Panc1 (cell line): ENCODE measurements at regions of chr6 and their contacts with region 1.

Region 1: DNA sequence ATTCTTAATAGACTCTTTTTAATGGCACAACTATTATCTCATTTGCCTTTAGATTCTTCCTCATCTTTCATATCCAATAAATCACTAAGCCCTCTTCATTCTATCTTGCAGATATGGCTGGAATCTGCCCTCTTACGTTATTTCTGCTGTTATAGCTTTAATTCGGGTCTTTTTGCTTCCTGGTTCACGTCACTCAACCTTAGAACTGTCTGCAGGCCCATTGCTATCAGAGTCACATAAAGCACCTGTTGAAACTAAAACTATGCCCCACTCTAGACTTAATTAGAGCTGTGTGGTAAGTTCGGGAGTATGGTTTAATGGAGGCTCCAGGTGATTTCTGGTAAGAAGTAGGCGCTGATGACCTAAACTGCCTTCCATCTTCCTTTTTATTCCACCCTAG is 988 bp downstream of the QRSL1 start:
- DNase-seq: no peak
- ATAC-seq: no peak
- H3K4me3 ChIP-seq: peak overlapping the region; percentile 86 to 88
- H3K27ac ChIP-seq: peak overlapping the region; percentile 97
- H3K4me1 ChIP-seq: peaks cover 25% of the 10 kb centered on the region
- H3K27me3 ChIP-seq: no peaks in the 10 kb centered on the region
- CTCF ChIP-seq: no peak

Region 2: GRCh38 chr6:106561686-106562405 is 68.5 kb before region 1 on chr6:
- CTCF ChIA-PET with region 1: no interaction called
- POLR2A ChIA-PET with region 1: interaction called, 13 read pairs
- in situ Hi-C with region 1: no loop called
- intact Hi-C with region 1: no loop called
- DNase-seq: no peak
- ATAC-seq: no peak
- H3K4me3 ChIP-seq: no peak overlapping the region
- H3K27ac ChIP-seq: no peak overlapping the region
- H3K4me1 ChIP-seq: no peaks in the 10 kb centered on the region
- H3K27me3 ChIP-seq: no peaks in the 10 kb centered on the region
- CTCF ChIP-seq: no peak

Region 3: DNA sequence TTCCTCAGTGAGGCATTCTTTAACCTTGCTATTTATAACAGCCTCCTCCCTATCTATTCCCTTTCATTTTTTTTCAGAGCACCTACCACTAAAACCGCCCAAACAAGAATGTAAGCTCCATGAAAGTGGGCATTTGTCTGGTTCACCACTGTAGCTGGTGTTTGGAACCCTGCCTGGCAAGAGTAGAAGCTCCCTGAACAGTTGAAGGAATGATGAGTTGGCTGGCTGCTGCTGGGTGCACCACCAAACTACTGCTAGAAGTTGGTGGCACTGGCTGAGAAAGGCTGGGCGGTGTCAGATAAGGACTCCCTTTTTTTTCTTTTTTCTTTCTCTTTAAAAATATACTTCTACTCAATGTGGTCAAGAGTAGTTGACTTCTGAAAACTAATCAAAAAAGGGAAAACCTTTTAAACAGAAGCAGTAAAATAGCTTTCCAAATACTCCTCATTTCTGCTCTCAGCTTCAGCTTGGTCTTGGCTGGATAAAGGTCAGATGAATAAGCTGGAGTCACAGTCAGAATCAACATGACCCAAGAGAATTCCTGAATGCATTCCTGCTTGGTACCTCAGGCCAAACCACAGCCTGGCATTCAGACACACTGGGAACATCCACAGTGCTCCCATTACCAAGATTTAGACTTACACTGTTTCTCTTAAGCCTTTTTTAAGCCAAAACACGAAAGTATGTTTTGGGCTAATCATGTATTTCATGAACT is 39.1 kb before region 1 on chr6:
- CTCF ChIA-PET with region 1: no interaction called
- POLR2A ChIA-PET with region 1: no interaction called
- in situ Hi-C with region 1: no loop called
- intact Hi-C with region 1: no loop called
- DNase-seq: no peak
- ATAC-seq: peak; percentile 80
- H3K4me3 ChIP-seq: no peak overlapping the region
- H3K27ac ChIP-seq: no peak overlapping the region
- H3K4me1 ChIP-seq: no peaks in the 10 kb centered on the region
- H3K27me3 ChIP-seq: no peaks in the 10 kb centered on the region
- CTCF ChIP-seq: no peak